Activated CD4-positive, alpha-beta T cell treated with anti-CD3 and anti-CD28 coated beads for 36 hours (primary cell): ENCODE measurements at regions of chrX and their contacts with region 1.

Region 1: DNA sequence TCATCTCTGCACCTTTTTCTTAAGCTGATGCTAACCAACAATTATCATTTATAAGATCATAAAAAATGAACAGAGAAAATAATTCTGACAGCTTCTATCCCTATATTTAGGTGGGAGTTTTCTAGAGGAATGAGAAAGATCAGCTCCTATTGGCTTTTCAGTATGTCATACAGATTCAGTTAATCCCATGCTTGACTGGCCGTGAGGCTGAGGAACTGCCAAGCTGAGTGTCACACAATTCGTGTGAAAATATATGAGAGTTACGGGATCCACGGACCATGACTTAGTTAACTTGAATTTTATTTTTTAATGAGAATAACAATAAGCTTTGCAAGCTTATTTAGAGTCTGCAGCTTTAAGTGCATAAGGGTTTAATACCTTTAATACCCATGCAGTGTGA is 37.5 kb downstream of the PHEX start:
- DNase-seq: no peak
- ATAC-seq: no peak
- H3K4me3 Mint-ChIP-seq: no peak overlapping the region
- H3K27ac Mint-ChIP-seq: no peak overlapping the region
- H3K4me1 Mint-ChIP-seq: peaks cover 32% of the 10 kb centered on the region
- H3K27me3 Mint-ChIP-seq: no peaks in the 10 kb centered on the region

Region 2: DNA sequence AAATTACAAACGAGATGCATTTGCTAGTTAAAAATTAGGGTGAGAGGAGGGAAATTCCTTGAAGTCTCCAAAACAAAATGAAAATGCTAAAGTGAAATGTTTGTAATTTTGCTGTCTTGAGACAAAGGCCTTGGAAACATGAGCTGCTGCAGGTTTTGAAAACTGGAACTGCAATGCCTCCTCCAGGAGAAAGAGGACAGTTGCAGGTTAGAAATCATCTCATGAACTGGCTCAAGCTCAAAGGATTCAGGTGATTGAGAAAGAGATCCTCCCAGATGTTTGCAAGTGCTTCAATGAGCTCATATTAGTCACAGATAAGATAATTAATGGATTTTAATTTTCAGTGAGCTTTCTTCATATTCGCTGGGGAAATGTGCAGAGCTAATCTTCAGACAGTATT is 344.1 kb before region 1 on chrX:
- CTCF ChIA-PET with region 1: no interaction called
- POLR2A ChIA-PET with region 1: no interaction called
- intact Hi-C with region 1: no loop called
- DNase-seq: no peak
- ATAC-seq: no peak
- H3K4me3 Mint-ChIP-seq: no peak overlapping the region
- H3K27ac Mint-ChIP-seq: no peak overlapping the region
- H3K4me1 Mint-ChIP-seq: no peaks in the 10 kb centered on the region
- H3K27me3 Mint-ChIP-seq: peaks cover 5% of the 10 kb centered on the region

Region 3: GRCh38 chrX:22081475-22082092 is 12.0 kb after region 1 on chrX:
- CTCF ChIA-PET with region 1: interaction called, 20 read pairs
- POLR2A ChIA-PET with region 1: no interaction called
- intact Hi-C with region 1: no loop called
- DNase-seq: peak; percentile 76
- ATAC-seq: no peak
- H3K4me3 Mint-ChIP-seq: no peak overlapping the region
- H3K27ac Mint-ChIP-seq: no peak overlapping the region
- H3K4me1 Mint-ChIP-seq: peaks cover 9% of the 10 kb centered on the region
- H3K27me3 Mint-ChIP-seq: no peaks in the 10 kb centered on the region